T-cell (primary cell): ENCODE measurements at regions of chr1 and their contacts with region 1.

Region 1: GRCh38 chr1:222706815-222707214 is 5.5 kb downstream of the AIDA start:
- DNase-seq: peak in 1 of 35 experiments; percentile 8
- ATAC-seq: no peak
- H3K4me3 ChIP-seq: no peak overlapping the region
- H3K4me3 Mint-ChIP-seq: no peak overlapping the region
- H3K27ac ChIP-seq: no peak overlapping the region
- H3K27ac Mint-ChIP-seq: no peak overlapping the region
- H3K4me1 ChIP-seq: peaks cover 6 to 13% of the 10 kb centered on the region in 2 experiments
- H3K4me1 Mint-ChIP-seq: peaks cover 71 to 75% (median 74%) of the 10 kb centered on the region in 3 donors
- H3K27me3 ChIP-seq: no peaks in the 10 kb centered on the region
- H3K27me3 Mint-ChIP-seq: no peaks in the 10 kb centered on the region

Region 2: DNA sequence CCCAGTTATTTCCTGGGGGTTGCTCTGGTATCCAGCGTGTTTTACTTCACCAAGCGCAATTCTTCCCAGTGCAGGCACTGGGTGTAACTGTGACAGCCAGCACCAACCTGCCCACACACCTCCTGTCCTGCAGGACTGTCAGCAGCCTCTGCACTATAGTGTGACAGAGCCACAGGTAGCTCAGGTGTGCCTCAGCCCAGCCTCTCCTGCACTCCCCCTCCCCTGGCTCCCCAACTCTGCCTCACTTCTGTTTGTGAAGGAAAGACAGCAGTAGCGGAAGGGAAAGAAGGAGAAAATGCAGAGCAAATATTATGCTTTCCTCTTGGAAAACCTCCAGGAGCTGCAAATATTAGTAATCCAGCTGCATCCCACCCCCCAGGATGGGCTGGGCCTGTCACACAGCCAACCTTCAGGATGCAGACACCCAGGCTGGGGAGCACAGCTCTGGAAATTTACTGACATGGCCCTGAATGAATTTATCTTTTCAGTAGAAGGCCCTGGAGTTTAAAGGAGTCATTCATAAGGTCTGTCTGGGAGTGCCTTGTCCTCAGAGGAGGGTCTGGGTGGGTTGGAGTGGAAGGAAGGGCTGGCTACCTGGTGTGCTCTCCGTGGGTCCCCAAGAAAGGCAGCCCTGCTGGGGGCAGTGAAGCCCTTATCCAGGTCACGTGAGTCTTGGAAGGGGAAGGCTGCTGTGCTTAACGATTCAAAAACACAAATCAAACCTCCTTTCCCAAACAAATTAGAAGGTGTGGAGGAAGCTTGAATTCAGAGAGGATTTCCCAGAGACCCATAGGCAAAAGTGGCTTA is 1026.4 kb after region 1 on chr1:
- CTCF ChIA-PET with region 1: interaction called in 1 of 2 experiments, 3 read pairs
- POLR2A ChIA-PET with region 1: interaction called in 1 of 2 experiments, 10 read pairs
- DNase-seq: no peak
- ATAC-seq: no peak
- H3K4me3 ChIP-seq: no peak overlapping the region
- H3K4me3 Mint-ChIP-seq: no peak overlapping the region
- H3K27ac ChIP-seq: no peak overlapping the region
- H3K27ac Mint-ChIP-seq: peak overlapping the region; percentile 55 to 59
- H3K4me1 ChIP-seq: peaks cover 0 to 38% of the 10 kb centered on the region in 2 experiments
- H3K4me1 Mint-ChIP-seq: peaks cover 23 to 53% (median 36%) of the 10 kb centered on the region in 3 donors
- H3K27me3 ChIP-seq: no peaks in the 10 kb centered on the region
- H3K27me3 Mint-ChIP-seq: no peaks in the 10 kb centered on the region